ENCODE measurements at regions of chr3 and their contacts with region 1.

Region 1: GRCh38 chr3:40267937-40268723 is 41.4 kb upstream of the EIF1B start:
- DNase-seq: no peak
- H3K4me3 ChIP-seq: no peak overlapping the region
- H3K27ac ChIP-seq: no peak overlapping the region
- H3K4me1 ChIP-seq: no peaks in the 10 kb centered on the region
- H3K27me3 ChIP-seq: no peaks in the 10 kb centered on the region
- CTCF ChIP-seq: no peak
- EP300 ChIP-seq: no peak
- POLR2A ChIP-seq: no peak

Region 2: GRCh38 chr3:38493031-38493430 is 1775.1 kb before region 1 on chr3:
- intact Hi-C with region 1: loop called in 1 of 4 experiments (anchors 5 kb)
- DNase-seq: no peak
- H3K4me3 ChIP-seq: no peak overlapping the region
- H3K27ac ChIP-seq: no peak overlapping the region
- H3K4me1 ChIP-seq: no peaks in the 10 kb centered on the region
- H3K27me3 ChIP-seq: no peaks in the 10 kb centered on the region
- CTCF ChIP-seq: no peak
- EP300 ChIP-seq: no peak
- POLR2A ChIP-seq: no peak